ENCODE measurements at regions of chr5 and their contacts with region 1.

Region 1: GRCh38 chr5:123344816-123345426 is 78.3 kb downstream of the CEP120 start:
- DNase-seq: peak; percentile 10
- H3K4me3 ChIP-seq: no peak overlapping the region
- H3K27ac ChIP-seq: no peak overlapping the region
- H3K4me1 ChIP-seq: no peaks in the 10 kb centered on the region
- H3K27me3 ChIP-seq: no peaks in the 10 kb centered on the region
- CTCF ChIP-seq: peak in 3 of 4 experiments; percentile 46 to 64 (median 58)
- POLR2A ChIP-seq: no peak

Region 2: GRCh38 chr5:121758615-121759014 is 1586.3 kb before region 1 on chr5:
- intact Hi-C with region 1: no loop called
- DNase-seq: no peak
- H3K4me3 ChIP-seq: no peak overlapping the region
- H3K27ac ChIP-seq: no peak overlapping the region
- H3K4me1 ChIP-seq: no peaks in the 10 kb centered on the region
- H3K27me3 ChIP-seq: no peaks in the 10 kb centered on the region
- CTCF ChIP-seq: no peak
- POLR2A ChIP-seq: no peak

Region 3: DNA sequence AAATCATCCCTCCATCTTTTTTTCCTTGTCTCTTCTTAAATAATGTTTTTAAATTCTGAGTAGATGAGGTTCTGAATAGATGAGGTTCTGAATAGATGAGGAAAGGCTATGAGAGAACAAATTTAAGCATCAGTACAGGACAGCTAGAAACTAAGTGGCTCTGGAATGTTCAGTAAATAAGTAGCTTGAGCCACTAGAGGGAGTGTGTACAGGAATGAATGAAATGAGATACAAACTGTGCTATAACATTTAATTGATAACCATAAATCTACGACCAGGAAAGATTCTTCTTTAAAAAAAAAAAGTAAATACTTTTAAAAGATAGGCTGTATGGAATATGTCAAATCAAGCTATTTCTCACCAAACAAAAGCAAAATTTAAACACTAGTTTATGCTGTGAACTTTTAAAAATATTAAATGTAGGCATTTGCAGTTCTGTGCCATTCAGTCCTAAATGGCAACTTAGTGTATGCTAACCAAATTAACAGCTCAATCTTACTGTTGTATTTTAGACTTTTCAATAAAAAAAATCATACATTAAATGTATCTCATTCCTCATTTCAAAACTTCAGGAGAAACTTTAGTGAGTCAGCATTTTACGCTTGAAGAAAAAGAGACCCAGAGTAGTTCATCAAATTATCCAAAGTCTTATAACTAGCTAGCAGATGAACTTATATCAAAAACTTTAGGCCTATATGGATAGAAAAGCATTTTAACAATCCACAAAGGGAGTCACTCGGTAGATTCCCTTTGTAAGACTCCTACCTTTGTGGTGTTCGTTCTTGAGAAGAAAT is 640.5 kb before region 1 on chr5:
- intact Hi-C with region 1: loop called (anchors 10 kb)
- DNase-seq: peak; percentile 10
- H3K4me3 ChIP-seq: no peak overlapping the region
- H3K27ac ChIP-seq: no peak overlapping the region
- H3K4me1 ChIP-seq: no peaks in the 10 kb centered on the region
- H3K27me3 ChIP-seq: no peaks in the 10 kb centered on the region
- CTCF ChIP-seq: peak in 3 of 4 experiments; percentile 42 to 62 (median 57)
- POLR2A ChIP-seq: no peak

Region 4: DNA sequence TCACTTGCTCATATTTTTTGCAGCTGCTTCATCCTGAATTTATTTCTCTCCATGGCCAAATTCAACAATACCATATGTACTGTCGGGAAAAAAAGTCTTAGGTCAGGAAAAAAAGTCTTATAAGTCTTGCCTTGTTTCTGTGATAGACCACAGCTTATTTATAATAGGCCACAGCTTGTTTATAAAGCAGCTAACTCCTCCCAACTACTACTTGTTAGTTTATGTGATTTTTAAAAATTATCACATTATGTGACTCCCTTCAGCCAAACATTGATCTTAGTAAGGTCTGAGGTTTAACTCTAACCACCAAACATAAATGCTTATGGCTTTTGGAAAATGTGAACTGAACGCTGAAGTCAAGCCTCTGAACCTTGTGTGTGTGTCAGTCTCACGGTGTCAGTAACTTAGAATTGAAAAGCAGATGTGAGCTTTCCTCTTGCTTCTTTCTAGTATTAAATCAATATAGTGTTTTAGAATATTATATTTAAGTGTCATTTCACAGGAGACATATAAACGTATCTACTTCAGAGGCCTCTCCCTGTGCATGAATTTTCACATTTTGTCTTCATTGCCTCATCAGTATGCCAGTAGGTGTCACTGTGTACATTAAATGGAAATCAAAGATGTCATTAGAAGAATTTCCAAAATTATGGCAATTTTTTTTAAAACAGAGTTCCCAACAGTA is 448.2 kb before region 1 on chr5:
- intact Hi-C with region 1: loop called (anchors 10 kb)
- DNase-seq: no peak
- H3K4me3 ChIP-seq: no peak overlapping the region
- H3K27ac ChIP-seq: no peak overlapping the region
- H3K4me1 ChIP-seq: no peaks in the 10 kb centered on the region
- H3K27me3 ChIP-seq: no peaks in the 10 kb centered on the region
- CTCF ChIP-seq: peak in 3 of 4 experiments; percentile 52 to 66 (median 52)
- POLR2A ChIP-seq: no peak

Region 5: GRCh38 chr5:123164054-123164453 is 180.9 kb before region 1 on chr5:
- intact Hi-C with region 1: loop called (anchors 10 kb)
- DNase-seq: no peak
- H3K4me3 ChIP-seq: no peak overlapping the region
- H3K27ac ChIP-seq: no peak overlapping the region
- H3K4me1 ChIP-seq: no peaks in the 10 kb centered on the region
- H3K27me3 ChIP-seq: no peaks in the 10 kb centered on the region
- CTCF ChIP-seq: no peak
- POLR2A ChIP-seq: no peak

Region 6: GRCh38 chr5:123180178-123180577 is 164.7 kb before region 1 on chr5:
- intact Hi-C with region 1: no loop called
- DNase-seq: no peak
- H3K4me3 ChIP-seq: no peak overlapping the region
- H3K27ac ChIP-seq: no peak overlapping the region
- H3K4me1 ChIP-seq: no peaks in the 10 kb centered on the region
- H3K27me3 ChIP-seq: no peaks in the 10 kb centered on the region
- CTCF ChIP-seq: no peak
- POLR2A ChIP-seq: no peak

Region 7: DNA sequence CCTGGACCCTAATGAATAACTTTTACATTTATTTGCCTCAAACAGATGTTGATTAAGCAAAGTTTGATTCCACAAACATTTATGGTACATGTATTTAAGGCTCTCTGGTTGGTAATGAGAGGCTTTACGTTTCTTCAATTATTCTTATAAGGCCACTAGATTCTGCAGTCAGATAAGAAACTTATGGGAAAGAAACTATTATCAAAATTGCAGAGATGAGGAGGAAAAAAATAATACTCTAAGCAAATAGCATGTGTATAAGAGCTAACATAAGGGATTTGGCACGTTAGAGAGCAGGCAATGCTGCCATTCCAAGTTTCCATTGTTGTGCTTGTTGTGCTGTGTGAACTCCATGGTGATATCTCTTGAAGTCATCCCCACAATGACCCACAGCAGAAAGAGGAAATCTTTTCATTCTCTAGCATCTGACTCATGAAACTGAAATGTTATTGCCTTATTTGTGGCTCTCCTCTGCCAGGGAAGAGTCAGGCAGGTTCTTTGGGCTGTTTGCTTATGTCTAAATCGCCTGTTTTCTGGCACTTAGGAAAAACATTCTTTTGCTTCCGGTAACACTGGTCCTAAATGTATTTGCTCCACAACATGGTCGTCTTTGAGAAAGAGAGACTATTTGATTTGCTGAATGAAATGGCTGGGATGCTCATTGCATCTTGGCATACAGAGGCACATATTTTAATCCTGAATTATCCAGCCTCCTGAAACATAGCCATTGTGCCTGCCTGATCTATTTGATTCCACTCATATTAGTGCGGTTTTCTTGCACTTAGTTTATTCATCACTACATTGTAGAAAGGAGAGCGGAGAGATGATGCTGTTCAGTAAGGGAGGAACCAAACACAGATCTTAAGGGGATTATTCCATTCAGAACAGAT is 355.7 kb after region 1 on chr5:
- intact Hi-C with region 1: no loop called
- DNase-seq: peak; percentile 6
- H3K4me3 ChIP-seq: no peak overlapping the region
- H3K27ac ChIP-seq: no peak overlapping the region
- H3K4me1 ChIP-seq: no peaks in the 10 kb centered on the region
- H3K27me3 ChIP-seq: no peaks in the 10 kb centered on the region
- CTCF ChIP-seq: no peak
- POLR2A ChIP-seq: no peak